Ovary (tissue), 10 donors: ENCODE measurements at regions of chr20 and their contacts with region 1.

Region 1: DNA sequence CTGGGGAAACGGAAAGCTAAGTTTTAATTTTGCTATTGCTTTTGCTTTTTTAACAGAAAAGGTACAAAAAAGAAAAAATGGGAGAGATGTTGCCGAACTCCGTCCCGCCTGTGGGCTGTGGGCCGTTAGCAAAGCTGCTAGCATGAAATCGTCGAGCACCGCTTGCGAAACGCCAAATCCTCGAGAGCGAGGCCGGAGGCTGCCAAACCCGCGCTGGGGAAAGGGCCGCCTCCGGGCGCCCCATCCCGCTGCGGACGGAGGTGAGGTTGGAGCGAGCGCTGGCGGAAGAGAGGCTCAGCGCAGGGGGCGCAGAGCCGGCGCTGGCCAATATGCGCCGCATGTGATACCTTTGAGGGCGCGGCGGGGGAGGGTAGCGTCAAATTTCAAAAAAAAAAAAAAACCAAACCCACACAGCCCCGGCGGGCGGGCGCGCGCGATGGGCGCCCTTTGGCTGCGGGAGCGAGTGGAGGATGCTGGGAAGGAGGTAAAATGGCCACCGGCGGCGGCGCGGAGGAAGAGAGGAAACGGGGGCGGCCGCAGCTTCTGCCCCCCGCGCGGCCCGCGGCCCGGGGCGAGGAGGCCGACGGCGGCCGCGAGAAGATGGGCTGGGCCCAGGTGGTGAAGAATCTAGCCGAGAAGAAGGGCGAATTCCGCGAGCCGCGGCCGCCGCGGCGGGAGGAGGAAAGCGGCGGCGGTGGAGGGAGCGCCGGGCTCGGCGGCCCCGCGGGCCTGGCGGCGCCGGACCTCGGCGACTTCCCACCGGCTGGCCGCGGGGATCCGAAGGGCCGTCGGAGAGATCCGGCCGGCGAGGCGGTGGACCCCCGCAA is at the start of gene ZCCHC3:
- DNase-seq: peak; percentile 92 to 96 (median 93)
- H3K4me3 ChIP-seq: peak within 1 kb of the TSS; percentile 70
- H3K27ac ChIP-seq: peak within 1 kb of the TSS; percentile 97 to 98
- H3K4me1 ChIP-seq: peaks cover 15% of the 10 kb centered on the region
- H3K27me3 ChIP-seq: no peaks in the 10 kb centered on the region
- CTCF ChIP-seq: peak in 1 of 3 donors; percentile 19
- EP300 ChIP-seq: peak; percentile 37
- POLR2A ChIP-seq: peak; percentile 43
- total RNA-seq, gene ZCCHC3: 13.6 to 28.1 (median 23.1) TPM

Region 2: GRCh38 chr20:324177-325044 is 27.1 kb after region 1 on chr20:
- intact Hi-C with region 1: loop called in 1 of 4 experiments (anchors 1 kb)
- DNase-seq: peak; percentile 87 to 94 (median 92)
- H3K4me3 ChIP-seq: peak overlapping the region; percentile 69
- H3K27ac ChIP-seq: peak overlapping the region; percentile 23 to 97
- H3K4me1 ChIP-seq: peaks cover 5% of the 10 kb centered on the region
- H3K27me3 ChIP-seq: no peaks in the 10 kb centered on the region
- CTCF ChIP-seq: peak in 2 of 3 donors; percentile 20 to 31
- EP300 ChIP-seq: no peak
- POLR2A ChIP-seq: peak; percentile 57